CD8-positive, alpha-beta T cell (primary cell): ENCODE measurements at regions of chr15 and their contacts with region 1.

Region 1: GRCh38 chr15:50354838-50355618 is at the start of gene GABPB1:
- DNase-seq: peak; percentile 72 to 95 (median 85)
- ATAC-seq: peak; percentile 45
- H3K4me3 ChIP-seq: peak within 1 kb of the TSS; percentile 86 to 90
- H3K4me3 Mint-ChIP-seq: peak within 1 kb of the TSS; percentile 93
- H3K27ac ChIP-seq: peak within 1 kb of the TSS; percentile 94 to 97
- H3K27ac Mint-ChIP-seq: peak within 1 kb of the TSS; percentile 98
- H3K4me1 ChIP-seq: peaks cover 38% of the 10 kb centered on the region
- H3K4me1 Mint-ChIP-seq: peaks cover 55% of the 10 kb centered on the region
- H3K27me3 ChIP-seq: no peaks in the 10 kb centered on the region
- H3K27me3 Mint-ChIP-seq: no peaks in the 10 kb centered on the region
- CTCF ChIP-seq: no peak
- total RNA-seq, gene GABPB1: 27.0 to 31.0 TPM

Region 2: DNA sequence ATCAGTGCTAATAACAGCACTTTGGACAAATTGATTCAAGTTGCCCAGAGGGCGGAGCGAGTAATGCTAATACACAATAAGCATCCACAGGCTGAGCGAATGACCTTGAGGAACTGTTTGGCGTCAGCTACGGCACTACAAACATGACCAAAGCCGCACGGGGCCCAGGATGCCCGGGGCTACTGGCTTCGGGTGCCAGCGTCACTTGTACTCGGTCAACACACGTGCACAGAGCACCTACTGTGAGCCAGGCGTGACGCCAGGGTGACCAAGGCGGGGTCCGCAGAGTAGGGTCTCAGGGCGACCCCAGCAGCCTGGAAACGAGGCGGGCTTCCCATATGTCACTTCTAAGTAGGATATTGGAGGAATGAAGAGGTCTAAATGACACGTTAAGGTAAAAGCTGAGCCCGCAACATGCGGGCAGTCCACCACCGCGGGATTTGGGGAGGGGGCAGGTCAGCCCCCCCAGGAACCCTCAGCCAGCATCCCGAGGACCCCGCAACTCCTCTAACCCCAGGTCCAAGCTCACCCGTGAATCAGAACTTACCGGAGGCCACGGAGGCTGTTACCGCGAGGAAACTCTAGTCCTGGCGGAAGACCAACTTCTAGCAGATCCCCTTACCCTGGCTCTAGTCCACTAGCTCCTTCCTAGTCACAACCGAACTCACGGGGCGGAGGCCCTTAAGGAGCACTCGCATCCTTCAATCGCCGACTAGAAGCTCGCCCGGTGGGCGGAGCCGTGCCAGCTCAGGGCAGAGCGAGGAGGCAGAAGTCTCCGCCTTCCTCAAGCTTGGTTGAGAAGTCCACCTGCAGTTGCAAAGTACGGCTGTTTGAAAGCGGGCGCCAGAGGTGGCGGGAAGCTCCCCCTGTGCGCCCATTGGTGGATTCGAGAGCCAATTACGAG is 1544.4 kb before region 1 on chr15 and contains the start of gene CEP152:
- CTCF ChIA-PET with region 1: no interaction called
- POLR2A ChIA-PET with region 1: interaction called, 5 read pairs
- intact Hi-C with region 1: loop called (anchors 2 to 5 kb)
- DNase-seq: peak; percentile 96 to 100 (median 98)
- ATAC-seq: peak; percentile 94
- H3K4me3 ChIP-seq: peak within 1 kb of the TSS; percentile 83 to 95
- H3K4me3 Mint-ChIP-seq: peak within 1 kb of the TSS; percentile 90
- H3K27ac ChIP-seq: peak within 1 kb of the TSS; percentile 64 to 73
- H3K27ac Mint-ChIP-seq: peak within 1 kb of the TSS; percentile 71
- H3K4me1 ChIP-seq: peaks cover 13% of the 10 kb centered on the region
- H3K4me1 Mint-ChIP-seq: peaks cover 33% of the 10 kb centered on the region
- H3K27me3 ChIP-seq: no peaks in the 10 kb centered on the region
- H3K27me3 Mint-ChIP-seq: peaks cover 6% of the 10 kb centered on the region
- CTCF ChIP-seq: no peak
- total RNA-seq, gene CEP152: 3.9 to 5.1 TPM

Region 3: GRCh38 chr15:49155110-49155833 is 1199.8 kb before region 1 on chr15 and contains the start of gene COPS2:
- CTCF ChIA-PET with region 1: no interaction called
- POLR2A ChIA-PET with region 1: interaction called, 12 read pairs
- intact Hi-C with region 1: loop called (anchors 1 to 2 kb)
- DNase-seq: peak; percentile 84 to 98 (median 93)
- ATAC-seq: peak; percentile 94
- H3K4me3 ChIP-seq: peak within 1 kb of the TSS; percentile 83 to 90
- H3K4me3 Mint-ChIP-seq: peak within 1 kb of the TSS; percentile 99
- H3K27ac ChIP-seq: peak within 1 kb of the TSS; percentile 83 to 92
- H3K27ac Mint-ChIP-seq: peak within 1 kb of the TSS; percentile 98
- H3K4me1 ChIP-seq: peaks cover 36% of the 10 kb centered on the region
- H3K4me1 Mint-ChIP-seq: peaks cover 55% of the 10 kb centered on the region
- H3K27me3 ChIP-seq: no peaks in the 10 kb centered on the region
- H3K27me3 Mint-ChIP-seq: no peaks in the 10 kb centered on the region
- CTCF ChIP-seq: no peak
- total RNA-seq, gene COPS2: 147 to 159 TPM

Region 4: DNA sequence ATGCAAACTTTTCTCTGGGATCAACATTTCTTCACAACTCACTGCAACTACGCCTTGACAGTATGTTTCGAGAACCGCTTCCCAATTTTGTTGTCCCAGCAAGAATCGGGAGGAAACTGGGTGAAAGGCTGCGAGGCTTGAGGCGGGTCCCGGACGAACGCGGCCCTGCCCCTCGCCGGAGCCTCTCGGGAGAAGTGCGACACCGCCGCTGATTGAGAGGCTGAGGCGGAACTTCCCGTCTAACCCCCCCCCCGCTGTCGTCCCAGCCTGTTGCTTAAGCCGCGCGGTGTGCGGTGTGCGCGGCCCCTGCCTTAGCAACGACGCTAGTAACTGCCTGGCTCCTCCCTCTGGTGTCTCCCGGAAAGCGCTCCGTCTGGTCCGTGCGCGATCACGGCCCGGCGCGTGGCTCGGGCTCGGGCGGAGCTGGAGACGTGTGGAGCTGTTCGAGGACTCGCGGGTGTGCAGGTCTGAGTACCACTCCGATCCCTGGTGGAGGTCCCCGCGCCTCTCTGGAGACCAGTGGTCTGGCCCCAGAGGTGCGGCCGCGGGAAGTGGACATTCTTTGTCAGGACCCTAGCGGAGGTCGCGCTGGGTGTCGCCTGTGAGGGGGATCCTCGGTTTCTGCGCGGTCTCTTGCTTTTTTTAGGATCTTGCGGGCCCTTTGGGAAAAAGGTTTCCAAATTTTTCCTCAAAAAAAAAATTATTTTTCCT is 734.2 kb before region 1 on chr15 and contains the starts of genes DTWD1 and FAM227B:
- CTCF ChIA-PET with region 1: no interaction called
- POLR2A ChIA-PET with region 1: interaction called, 3 read pairs
- intact Hi-C with region 1: loop called (anchors 2 kb)
- DNase-seq: peak; percentile 85 to 98 (median 93)
- ATAC-seq: peak; percentile 97
- H3K4me3 ChIP-seq: peak within 1 kb of the TSS; percentile 71 to 83
- H3K4me3 Mint-ChIP-seq: peak within 1 kb of the TSS; percentile 94
- H3K27ac ChIP-seq: peak within 1 kb of the TSS; percentile 86 to 89
- H3K27ac Mint-ChIP-seq: peak within 1 kb of the TSS; percentile 99
- H3K4me1 ChIP-seq: peaks cover 28% of the 10 kb centered on the region
- H3K4me1 Mint-ChIP-seq: peaks cover 54% of the 10 kb centered on the region
- H3K27me3 ChIP-seq: no peaks in the 10 kb centered on the region
- H3K27me3 Mint-ChIP-seq: no peaks in the 10 kb centered on the region
- CTCF ChIP-seq: no peak
- total RNA-seq, gene DTWD1: 8.7 to 9.7 TPM
- total RNA-seq, gene FAM227B: 3.3 to 4.3 TPM

Region 5: DNA sequence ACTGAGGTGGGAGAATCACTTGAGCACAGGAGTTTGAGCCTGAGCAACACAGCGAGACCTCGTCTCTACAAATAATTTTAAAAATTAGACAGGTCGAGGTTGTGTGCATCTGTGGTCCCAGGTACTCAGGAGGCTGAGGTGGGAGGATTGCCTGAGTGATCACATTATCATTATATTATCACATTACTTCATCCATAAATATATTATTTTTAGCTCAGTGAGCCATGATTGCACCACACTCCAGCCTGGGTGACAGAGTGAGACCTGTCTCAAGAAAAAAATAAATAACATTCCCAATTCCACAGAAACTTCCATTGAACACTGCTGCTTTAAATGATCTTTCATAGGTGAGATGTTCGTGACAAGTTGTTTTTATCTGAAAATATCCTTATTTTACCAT is 21.8 kb before region 1 on chr15:
- CTCF ChIA-PET with region 1: no interaction called
- POLR2A ChIA-PET with region 1: interaction called, 3 read pairs
- intact Hi-C with region 1: loop called in 1 of 2 experiments (anchors 2 kb)
- DNase-seq: no peak
- ATAC-seq: no peak
- H3K4me3 ChIP-seq: no peak overlapping the region
- H3K4me3 Mint-ChIP-seq: no peak overlapping the region
- H3K27ac ChIP-seq: no peak overlapping the region
- H3K27ac Mint-ChIP-seq: no peak overlapping the region
- H3K4me1 ChIP-seq: peaks cover 4% of the 10 kb centered on the region
- H3K4me1 Mint-ChIP-seq: peaks cover 15% of the 10 kb centered on the region
- H3K27me3 ChIP-seq: no peaks in the 10 kb centered on the region
- H3K27me3 Mint-ChIP-seq: no peaks in the 10 kb centered on the region
- CTCF ChIP-seq: no peak

Region 6: GRCh38 chr15:50377867-50378751 is 23.1 kb after region 1 on chr15:
- CTCF ChIA-PET with region 1: no interaction called
- POLR2A ChIA-PET with region 1: interaction called, 10 read pairs
- intact Hi-C with region 1: no loop called
- DNase-seq: no peak
- ATAC-seq: no peak
- H3K4me3 ChIP-seq: no peak overlapping the region
- H3K4me3 Mint-ChIP-seq: no peak overlapping the region
- H3K27ac ChIP-seq: no peak overlapping the region
- H3K27ac Mint-ChIP-seq: no peak overlapping the region
- H3K4me1 ChIP-seq: no peaks in the 10 kb centered on the region
- H3K4me1 Mint-ChIP-seq: peaks cover 4% of the 10 kb centered on the region
- H3K27me3 ChIP-seq: no peaks in the 10 kb centered on the region
- H3K27me3 Mint-ChIP-seq: no peaks in the 10 kb centered on the region
- CTCF ChIP-seq: no peak

Region 7: DNA sequence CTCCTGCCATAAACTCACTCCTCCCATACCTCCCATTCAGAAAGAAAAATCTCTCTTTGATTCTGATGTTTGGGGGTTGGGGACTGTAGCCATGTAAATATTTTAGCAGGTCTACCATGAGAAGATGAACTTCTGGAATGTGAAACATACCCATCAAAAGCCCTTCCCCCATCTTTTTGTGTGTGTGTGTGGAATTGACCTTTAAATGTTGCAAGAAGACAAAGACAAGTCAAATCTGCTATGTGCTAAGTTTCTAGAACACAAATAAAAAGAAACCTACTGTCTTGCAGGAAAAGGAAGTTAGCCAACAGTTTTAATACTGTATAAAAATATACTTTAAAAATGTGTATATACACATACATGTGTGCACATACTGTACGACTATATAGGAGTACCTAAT is 221.1 kb after region 1 on chr15:
- CTCF ChIA-PET with region 1: no interaction called
- POLR2A ChIA-PET with region 1: no interaction called
- intact Hi-C with region 1: no loop called
- DNase-seq: no peak
- ATAC-seq: no peak
- H3K4me3 ChIP-seq: no peak overlapping the region
- H3K4me3 Mint-ChIP-seq: no peak overlapping the region
- H3K27ac ChIP-seq: no peak overlapping the region
- H3K27ac Mint-ChIP-seq: peak overlapping the region; percentile 12
- H3K4me1 ChIP-seq: no peaks in the 10 kb centered on the region
- H3K4me1 Mint-ChIP-seq: no peaks in the 10 kb centered on the region
- H3K27me3 ChIP-seq: no peaks in the 10 kb centered on the region
- H3K27me3 Mint-ChIP-seq: no peaks in the 10 kb centered on the region
- CTCF ChIP-seq: no peak

Region 8: GRCh38 chr15:50686468-50687301 is 331.7 kb after region 1 on chr15 and contains the start of gene TRPM7:
- CTCF ChIA-PET with region 1: no interaction called
- POLR2A ChIA-PET with region 1: interaction called, 3 read pairs
- intact Hi-C with region 1: loop called (anchors 5 to 10 kb)
- DNase-seq: peak; percentile 74 to 96 (median 87)
- ATAC-seq: peak; percentile 74
- H3K4me3 ChIP-seq: peak within 1 kb of the TSS; percentile 78 to 88
- H3K4me3 Mint-ChIP-seq: peak within 1 kb of the TSS; percentile 99
- H3K27ac ChIP-seq: peak within 1 kb of the TSS; percentile 90 to 93
- H3K27ac Mint-ChIP-seq: peak within 1 kb of the TSS; percentile 99
- H3K4me1 ChIP-seq: peaks cover 21% of the 10 kb centered on the region
- H3K4me1 Mint-ChIP-seq: peaks cover 50% of the 10 kb centered on the region
- H3K27me3 ChIP-seq: no peaks in the 10 kb centered on the region
- H3K27me3 Mint-ChIP-seq: no peaks in the 10 kb centered on the region
- CTCF ChIP-seq: no peak
- total RNA-seq, gene TRPM7: 29.5 to 30.3 TPM